H1 (cell line): ENCODE measurements at regions of chr16 and their contacts with region 1.

Region 1: DNA sequence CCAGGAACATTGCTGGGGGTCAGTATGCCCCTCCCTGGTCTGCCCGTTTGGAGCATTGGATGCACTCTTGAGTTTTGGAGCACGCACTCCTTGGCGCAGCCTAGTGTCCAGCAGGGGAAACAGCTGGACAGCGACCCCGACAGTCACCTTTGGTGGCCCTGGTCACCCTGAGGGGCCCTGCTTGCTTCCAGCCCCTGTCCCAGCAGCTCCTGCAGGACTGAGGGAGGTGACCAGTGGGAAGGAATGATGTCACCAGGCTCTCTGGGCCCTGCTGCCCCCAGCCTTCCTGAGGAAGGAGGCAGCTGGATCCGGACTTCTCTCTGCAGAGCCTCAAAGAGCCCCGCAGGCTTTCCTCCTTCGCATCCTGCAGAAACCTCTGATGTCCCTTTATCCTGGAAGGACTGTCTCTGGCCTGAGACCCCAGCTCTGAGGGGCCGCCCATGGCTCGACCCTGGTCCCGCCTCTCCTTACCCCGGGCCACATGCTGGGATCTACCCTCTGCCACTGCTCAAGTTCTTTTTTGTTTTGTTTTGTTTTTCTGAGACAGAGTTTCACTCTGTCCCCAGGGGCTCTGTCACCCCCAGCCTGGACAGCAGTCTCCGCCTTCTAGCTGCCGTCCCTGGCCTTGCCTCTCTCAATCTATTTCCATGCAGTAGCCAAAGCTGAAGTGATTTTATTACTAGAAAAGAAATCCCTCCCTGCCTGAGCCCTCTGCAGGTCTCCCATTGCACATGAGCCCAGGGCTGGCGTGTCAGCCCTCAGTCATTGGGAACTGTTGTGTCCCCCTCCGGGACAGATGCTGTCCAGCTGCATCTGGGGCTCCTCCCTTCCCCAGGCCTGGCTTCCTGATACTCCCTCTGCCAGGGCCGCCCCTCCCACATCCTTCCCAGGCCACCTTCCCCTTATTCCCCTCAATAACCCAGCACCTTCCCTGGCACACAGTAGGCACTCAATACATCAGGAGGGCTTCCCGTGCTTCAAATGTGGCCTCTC is 11.6 kb downstream of the ZSCAN10 start:
- DNase-seq: no peak
- H3K4me3 ChIP-seq: no peak overlapping the region
- H3K27ac ChIP-seq: no peak overlapping the region; the same call in 1 of the 2 replicates
- H3K4me1 ChIP-seq: peaks cover 0 to 6% (median 5%) of the 10 kb centered on the region in 4 experiments; a peak in 6 of 7 replicates
- H3K27me3 ChIP-seq: no peaks in the 10 kb centered on the region
- CTCF ChIP-seq: peak; percentile 55 to 67 (median 65)
- EP300 ChIP-seq: no peak
- POLR2A ChIP-seq: peak in 1 of 2 experiments; percentile 72; a peak in 2 of 3 replicates
- RAD21 ChIP-seq: peak; percentile 25 to 51; a peak in 3 of 4 replicates

Region 2: GRCh38 chr16:3023669-3024478 is 63.7 kb before region 1 on chr16 and contains the starts of genes HCFC1R1 and THOC6:
- CTCF ChIA-PET with region 1: interaction called, 11 read pairs
- POLR2A ChIA-PET with region 1: interaction called, 8 read pairs
- DNase-seq: peak; percentile 97 to 98
- H3K4me3 ChIP-seq: peak within 1 kb of the TSS; percentile 39 to 97 (median 94)
- H3K27ac ChIP-seq: peak within 1 kb of the TSS; percentile 94
- H3K4me1 ChIP-seq: peaks cover 0 to 23% (median 20%) of the 10 kb centered on the region in 4 experiments; a peak in 6 of 7 replicates
- H3K27me3 ChIP-seq: no peaks in the 10 kb centered on the region
- CTCF ChIP-seq: no peak
- EP300 ChIP-seq: no peak
- POLR2A ChIP-seq: peak; percentile 86 to 89
- RAD21 ChIP-seq: peak in 1 of 2 experiments; percentile 2; a peak in 2 of 4 replicates
- total RNA-seq, gene HCFC1R1: 66.2 and 72.7 TPM in 2 replicates
- total RNA-seq, gene THOC6: 78.5 and 82.9 TPM in 2 replicates

Region 3: GRCh38 chr16:3045357-3045728 is 42.2 kb before region 1 on chr16:
- CTCF ChIA-PET with region 1: interaction called, 4 read pairs
- POLR2A ChIA-PET with region 1: interaction called, 11 read pairs
- DNase-seq: peak in 1 of 2 experiments; percentile 73
- H3K4me3 ChIP-seq: peak overlapping the region; percentile 66 to 89 (median 80)
- H3K27ac ChIP-seq: no peak overlapping the region; the same call in 1 of the 2 replicates
- H3K4me1 ChIP-seq: peaks cover 0 to 3% (median 0%) of the 10 kb centered on the region in 4 experiments; a peak in 3 of 7 replicates
- H3K27me3 ChIP-seq: peaks cover 0 to 8% (median 3%) of the 10 kb centered on the region in 4 experiments; a peak in 6 of 7 replicates
- CTCF ChIP-seq: no peak
- EP300 ChIP-seq: no peak
- POLR2A ChIP-seq: no peak
- RAD21 ChIP-seq: no peak

Region 4: GRCh38 chr16:3074860-3075522 is 12.5 kb before region 1 on chr16:
- CTCF ChIA-PET with region 1: interaction called, 17 read pairs
- POLR2A ChIA-PET with region 1: interaction called, 86 read pairs
- DNase-seq: no peak
- H3K4me3 ChIP-seq: no peak overlapping the region
- H3K27ac ChIP-seq: no peak overlapping the region
- H3K4me1 ChIP-seq: peaks cover 0 to 2% (median 0%) of the 10 kb centered on the region in 4 experiments; a peak in 2 of 7 replicates
- H3K27me3 ChIP-seq: no peaks in the 10 kb centered on the region; a peak in 1 of 7 replicates
- CTCF ChIP-seq: no peak
- EP300 ChIP-seq: no peak
- POLR2A ChIP-seq: no peak
- RAD21 ChIP-seq: no peak

Region 5: DNA sequence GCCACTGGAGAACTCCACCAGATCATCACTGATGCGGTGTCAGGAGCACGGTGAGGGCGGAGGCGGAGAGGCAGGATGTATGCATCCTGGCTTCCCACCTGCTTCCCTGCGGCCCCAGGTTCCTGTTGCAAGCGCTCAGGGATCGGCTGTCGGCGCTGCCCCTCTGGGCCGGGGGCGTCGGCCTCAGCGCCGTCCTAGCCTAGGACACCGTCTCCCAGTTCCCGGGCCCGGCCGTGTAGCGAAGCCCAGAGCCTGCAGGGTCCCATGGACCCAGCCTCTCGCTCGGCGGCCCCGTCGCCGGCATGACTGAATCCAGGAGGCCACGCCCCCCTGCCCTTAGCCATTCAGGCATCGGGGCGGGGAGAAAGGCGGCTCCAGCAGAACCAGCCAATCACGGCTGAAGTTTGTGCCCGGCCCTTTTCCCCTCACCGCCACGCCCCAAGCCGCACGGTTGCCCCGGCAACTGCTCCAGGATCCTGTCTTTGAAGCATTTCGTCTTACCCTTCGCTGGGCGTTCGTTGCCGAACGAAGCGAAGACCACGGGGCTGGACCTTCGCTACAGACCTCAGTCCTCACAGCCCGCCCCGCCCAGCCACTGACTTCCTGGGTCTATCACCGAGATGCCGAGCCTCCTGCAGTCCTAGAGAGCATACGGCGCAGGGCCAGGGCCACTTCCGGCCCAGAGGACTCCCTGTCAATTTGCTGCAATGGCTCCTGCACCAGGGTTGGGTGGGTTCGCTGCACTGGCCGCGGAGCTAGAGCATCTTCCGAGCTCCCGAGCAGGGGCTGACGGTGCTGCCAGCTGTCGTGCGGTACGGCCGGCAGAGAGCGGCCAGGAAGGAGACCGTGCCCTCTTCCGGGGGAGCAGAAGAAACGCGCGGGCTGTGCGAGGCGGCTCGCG is 36.7 kb after region 1 on chr16:
- CTCF ChIA-PET with region 1: interaction called, 619 read pairs
- POLR2A ChIA-PET with region 1: interaction called, 30 read pairs
- DNase-seq: peak; percentile 87 to 98
- H3K4me3 ChIP-seq: peak overlapping the region; percentile 43 to 76 (median 67)
- H3K27ac ChIP-seq: no peak overlapping the region
- H3K4me1 ChIP-seq: peaks cover 0 to 11% (median 4%) of the 10 kb centered on the region in 4 experiments; a peak in 5 of 7 replicates
- H3K27me3 ChIP-seq: no peaks in the 10 kb centered on the region
- CTCF ChIP-seq: peak; percentile 10 to 16 (median 11); a peak in 3 of 4 replicates
- EP300 ChIP-seq: no peak
- POLR2A ChIP-seq: peak in 1 of 2 experiments; percentile 71; a peak in 1 of 3 replicates
- RAD21 ChIP-seq: peak in 1 of 2 experiments; percentile 21; a peak in 1 of 4 replicates